WTC11 (cell line): ENCODE measurements at regions of chr14 and their contacts with region 1.

Region 1: GRCh38 chr14:101352567-101352966 is 208.7 kb upstream of the DIO3 start:
- DNase-seq: no peak
- ATAC-seq: no peak
- H3K4me3 Mint-ChIP-seq: no peak overlapping the region
- H3K27ac Mint-ChIP-seq: no peak overlapping the region
- H3K4me1 Mint-ChIP-seq: peaks cover 9% of the 10 kb centered on the region
- H3K27me3 Mint-ChIP-seq: peaks cover 2% of the 10 kb centered on the region; the same call in 1 of the 2 replicates
- CTCF ChIP-seq: no peak

Region 2: GRCh38 chr14:101189266-101189665 is 163.3 kb before region 1 on chr14:
- CTCF ChIA-PET with region 1: no interaction called
- POLR2A ChIA-PET with region 1: no interaction called
- DNase-seq: no peak
- ATAC-seq: no peak
- H3K4me3 Mint-ChIP-seq: no peak overlapping the region
- H3K27ac Mint-ChIP-seq: no peak overlapping the region
- H3K4me1 Mint-ChIP-seq: peaks cover 10% of the 10 kb centered on the region
- H3K27me3 Mint-ChIP-seq: peaks cover 2% of the 10 kb centered on the region; the same call in 1 of the 2 replicates
- CTCF ChIP-seq: no peak

Region 3: DNA sequence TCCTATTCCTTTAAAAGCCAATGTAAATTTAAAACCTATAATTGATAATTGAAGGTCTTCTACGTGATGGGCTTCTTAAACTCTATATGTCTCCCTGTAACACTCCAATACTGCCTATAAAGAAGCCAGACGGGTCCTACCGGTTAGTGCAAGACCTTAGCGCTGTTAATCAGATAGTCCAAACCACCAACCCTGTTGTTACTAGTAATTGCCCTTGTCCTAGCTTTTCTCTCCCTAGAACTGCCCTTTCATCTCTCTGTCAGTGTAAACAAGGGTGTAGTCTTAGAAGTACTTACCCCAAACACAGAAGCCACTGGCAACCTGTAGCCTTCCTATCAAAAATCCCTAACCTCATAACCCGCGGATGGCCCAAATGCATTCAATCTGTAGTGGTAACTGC is 34.3 kb before region 1 on chr14:
- CTCF ChIA-PET with region 1: no interaction called
- POLR2A ChIA-PET with region 1: no interaction called
- DNase-seq: no peak
- ATAC-seq: no peak
- H3K4me3 Mint-ChIP-seq: no peak overlapping the region
- H3K27ac Mint-ChIP-seq: no peak overlapping the region
- H3K4me1 Mint-ChIP-seq: no peaks in the 10 kb centered on the region
- H3K27me3 Mint-ChIP-seq: peaks cover 11% of the 10 kb centered on the region
- CTCF ChIP-seq: no peak

Region 4: DNA sequence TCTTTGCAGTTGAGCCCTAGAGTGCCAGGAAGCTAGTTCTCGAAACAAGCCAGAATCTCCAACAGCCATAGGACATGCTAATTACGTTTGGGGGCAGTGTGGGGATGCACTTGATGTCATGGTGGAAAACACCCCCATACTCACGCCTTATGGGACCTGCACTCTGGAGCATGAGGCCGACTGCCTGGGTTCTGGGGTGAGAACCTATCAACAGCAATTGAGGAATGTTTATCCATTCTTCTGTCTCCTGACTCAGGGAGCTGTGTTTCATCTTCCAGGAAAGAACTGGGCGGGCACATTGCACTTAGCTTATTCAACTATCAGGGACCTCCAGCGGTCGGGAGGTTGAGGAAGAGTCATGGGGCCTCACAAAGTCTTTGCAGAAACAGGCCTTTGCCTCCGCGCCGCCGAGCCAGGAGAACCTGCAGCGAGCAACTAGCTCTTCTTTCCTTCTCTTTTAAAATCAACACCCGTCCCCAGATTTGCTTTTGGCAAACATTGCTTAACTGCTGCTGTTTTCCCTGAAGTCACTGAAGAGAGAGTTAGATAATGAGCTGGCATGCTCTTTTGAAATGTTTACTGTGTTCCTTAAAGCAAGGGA is 17.4 kb before region 1 on chr14:
- CTCF ChIA-PET with region 1: no interaction called
- POLR2A ChIA-PET with region 1: no interaction called
- DNase-seq: no peak
- ATAC-seq: no peak
- H3K4me3 Mint-ChIP-seq: no peak overlapping the region
- H3K27ac Mint-ChIP-seq: no peak overlapping the region
- H3K4me1 Mint-ChIP-seq: no peaks in the 10 kb centered on the region
- H3K27me3 Mint-ChIP-seq: no peaks in the 10 kb centered on the region; the same call in 1 of the 2 replicates
- CTCF ChIP-seq: no peak

Region 5: GRCh38 chr14:101363880-101364391 is 11.4 kb after region 1 on chr14:
- CTCF ChIA-PET with region 1: no interaction called
- POLR2A ChIA-PET with region 1: no interaction called
- DNase-seq: no peak
- ATAC-seq: no peak
- H3K4me3 Mint-ChIP-seq: no peak overlapping the region
- H3K27ac Mint-ChIP-seq: no peak overlapping the region
- H3K4me1 Mint-ChIP-seq: peaks cover 18% of the 10 kb centered on the region
- H3K27me3 Mint-ChIP-seq: no peaks in the 10 kb centered on the region
- CTCF ChIP-seq: no peak

Region 6: DNA sequence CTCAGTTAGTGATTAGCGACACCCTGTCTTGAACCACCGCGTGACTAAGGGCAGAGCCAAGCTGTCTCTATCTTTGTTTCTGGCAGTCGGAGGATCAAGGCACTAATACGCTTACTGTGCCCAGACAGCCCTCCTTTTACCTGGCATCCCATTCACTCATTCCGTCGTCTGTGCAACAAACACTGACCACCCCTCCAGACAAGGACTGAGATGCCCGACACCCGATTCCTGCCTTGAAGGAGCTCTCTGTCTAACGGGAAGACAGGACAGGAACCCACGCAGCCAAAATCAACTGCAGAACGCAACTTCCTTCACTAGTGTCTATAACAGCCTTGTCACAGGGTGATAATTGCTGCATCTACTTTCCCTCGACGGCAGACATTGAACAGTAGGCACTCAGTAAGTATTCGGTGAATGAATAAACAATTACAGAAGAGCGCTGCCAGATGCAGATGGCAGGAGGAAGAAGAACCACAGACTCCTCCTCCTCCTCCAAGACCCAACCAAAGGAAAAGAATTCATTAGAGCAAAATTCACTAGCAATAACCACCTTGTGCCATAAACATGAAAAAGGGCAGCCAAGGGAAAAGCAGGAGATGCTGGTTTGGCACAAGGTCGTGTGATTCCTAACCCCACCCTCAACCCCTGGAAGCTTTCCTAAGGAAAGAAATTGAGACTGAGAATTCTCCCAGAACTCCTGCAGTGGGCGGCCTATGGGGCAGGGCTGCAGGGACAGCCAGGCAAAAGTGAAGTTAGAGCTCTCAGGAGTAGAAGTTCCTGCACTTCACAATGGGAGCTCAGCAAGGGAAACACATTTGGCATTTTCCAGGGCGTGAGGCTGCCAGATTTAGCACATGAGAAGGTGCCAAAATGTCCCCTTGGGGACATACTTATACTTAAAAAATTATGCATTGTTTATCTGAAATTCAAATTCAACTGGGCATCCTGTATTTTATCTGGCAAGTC is 22.1 kb after region 1 on chr14:
- CTCF ChIA-PET with region 1: interaction called, 3 read pairs
- POLR2A ChIA-PET with region 1: interaction called, 19 read pairs
- DNase-seq: no peak
- ATAC-seq: no peak
- H3K4me3 Mint-ChIP-seq: no peak overlapping the region
- H3K27ac Mint-ChIP-seq: 0 out of 2 replicates have a peak overlapping the region, but pooled peaks have one; percentile 32
- H3K4me1 Mint-ChIP-seq: no peaks in the 10 kb centered on the region
- H3K27me3 Mint-ChIP-seq: no peaks in the 10 kb centered on the region
- CTCF ChIP-seq: no peak